ENCODE measurements at regions of chr12 and their contacts with region 1.

Region 1: DNA sequence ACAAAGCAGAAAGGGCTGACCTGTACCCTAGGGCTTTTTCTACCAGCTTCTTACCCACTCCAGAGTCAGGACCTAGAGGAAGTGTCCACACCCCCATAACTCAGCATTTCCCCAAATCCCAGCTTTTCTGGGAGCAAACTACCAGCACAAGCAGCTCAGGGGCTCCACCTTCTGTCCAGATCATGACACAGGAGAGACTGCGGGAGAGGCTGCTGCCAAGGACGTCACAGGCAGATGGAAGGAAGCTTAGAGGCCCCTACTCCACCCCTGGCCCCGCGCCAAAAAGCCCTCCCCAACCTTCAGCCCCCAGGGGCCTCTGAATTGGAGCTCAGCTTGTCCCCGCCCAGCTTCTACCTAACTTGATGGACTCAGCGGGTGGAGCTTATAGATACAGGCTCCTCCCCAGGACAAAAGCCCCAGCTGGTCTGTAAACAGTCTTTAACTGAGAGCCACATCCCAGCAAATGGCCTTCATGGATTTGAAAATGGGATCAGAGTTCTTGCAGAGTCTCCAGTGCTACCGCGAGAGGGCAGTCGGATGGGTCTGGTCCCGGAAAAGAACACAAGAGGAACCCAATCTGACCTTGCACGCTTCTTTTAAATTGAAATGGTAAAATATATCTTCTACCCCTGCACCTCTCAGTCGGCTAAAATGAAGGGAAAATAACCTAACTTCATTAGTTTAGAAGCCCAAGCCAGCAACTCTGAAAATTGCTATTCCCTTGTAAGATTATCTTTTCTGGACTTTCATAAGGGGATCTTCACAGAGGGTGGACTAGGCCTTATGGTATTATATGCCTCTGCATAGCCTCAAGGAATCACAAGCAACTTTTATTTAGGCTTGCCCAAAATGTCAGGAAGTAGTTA is 6.8 kb upstream of the BAZ2A start:
- DNase-seq: peak; percentile 85 to 98
- ATAC-seq: peak; percentile 60 to 85 (median 67)
- H3K4me3 ChIP-seq: peak overlapping the region; percentile 74
- H3K4me3 Mint-ChIP-seq: peak overlapping the region; percentile 99
- H3K27ac ChIP-seq: peak overlapping the region; percentile 68
- H3K27ac Mint-ChIP-seq: peak overlapping the region; percentile 91 to 93
- H3K4me1 ChIP-seq: peaks cover 51% of the 10 kb centered on the region
- H3K4me1 Mint-ChIP-seq: peaks cover 39 to 53% of the 10 kb centered on the region in 2 donors
- H3K27me3 ChIP-seq: no peaks in the 10 kb centered on the region
- H3K27me3 Mint-ChIP-seq: no peaks in the 10 kb centered on the region
- CTCF ChIP-seq: peak; percentile 57

Region 2: DNA sequence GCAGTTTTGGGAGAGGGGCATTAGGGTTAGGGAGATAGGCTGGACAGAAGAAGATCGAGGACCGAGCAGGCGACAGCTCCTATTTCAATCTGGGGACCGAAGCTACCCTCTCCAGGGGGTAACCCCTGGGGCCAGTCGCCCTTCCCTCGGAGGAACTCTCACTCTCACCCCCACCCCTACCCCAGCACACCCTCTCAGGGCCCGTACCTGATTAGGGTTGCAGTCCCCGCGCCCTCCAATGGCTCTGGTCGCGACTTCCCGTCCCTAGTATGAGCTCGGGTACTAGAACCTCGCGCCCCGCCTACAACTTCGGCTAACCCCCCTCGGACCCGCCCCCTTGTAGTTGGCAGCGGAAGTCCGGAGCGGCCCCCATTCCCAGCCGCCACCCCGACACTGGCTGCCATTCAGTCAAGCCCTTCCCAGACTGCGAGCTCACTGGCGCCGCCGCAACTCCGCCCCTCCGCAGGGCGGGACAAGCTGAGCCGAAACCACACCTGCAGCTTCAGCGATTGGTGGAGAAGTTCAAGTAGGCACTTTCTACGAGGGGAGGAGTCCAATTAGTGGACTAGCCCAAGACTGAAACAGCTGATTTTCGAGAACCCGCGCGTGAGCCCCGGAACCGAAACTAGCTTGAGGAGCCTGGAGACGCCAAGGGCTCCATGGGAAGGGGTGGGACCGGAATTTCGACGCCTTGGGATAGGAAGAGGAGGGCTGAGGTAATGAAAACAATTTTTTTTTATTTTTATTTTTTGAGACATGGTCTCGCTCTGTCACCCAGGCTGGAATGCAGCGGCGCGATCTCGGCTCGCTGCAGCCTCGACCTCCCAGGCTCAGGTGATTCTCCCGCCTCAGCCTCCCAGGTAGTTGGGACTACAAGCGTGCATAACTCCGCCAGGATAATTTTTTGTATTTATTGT is 276.8 kb before region 1 on chr12 and contains the start of gene STAT2:
- intact Hi-C with region 1: loop called (anchors 5 kb)
- DNase-seq: peak; percentile 98 to 99
- ATAC-seq: peak; percentile 93 to 98 (median 94)
- H3K4me3 ChIP-seq: peak within 1 kb of the TSS; percentile 80
- H3K4me3 Mint-ChIP-seq: peak within 1 kb of the TSS; percentile 97
- H3K27ac ChIP-seq: peak within 1 kb of the TSS; percentile 71
- H3K27ac Mint-ChIP-seq: peak within 1 kb of the TSS; percentile 88 to 91
- H3K4me1 ChIP-seq: peaks cover 17% of the 10 kb centered on the region
- H3K4me1 Mint-ChIP-seq: peaks cover 21 to 24% of the 10 kb centered on the region in 2 donors
- H3K27me3 ChIP-seq: no peaks in the 10 kb centered on the region
- H3K27me3 Mint-ChIP-seq: no peaks in the 10 kb centered on the region
- CTCF ChIP-seq: no peak
- total RNA-seq, gene STAT2: 140 to 157 (median 143) TPM

Region 3: GRCh38 chr12:56601503-56601902 is 35.4 kb before region 1 on chr12:
- intact Hi-C with region 1: loop called (anchors 5 kb)
- DNase-seq: peak in 1 of 2 donors; percentile 56
- ATAC-seq: peak in 2 of 3 donors; percentile 42 to 66
- H3K4me3 ChIP-seq: no peak overlapping the region
- H3K4me3 Mint-ChIP-seq: no peak overlapping the region
- H3K27ac ChIP-seq: no peak overlapping the region
- H3K27ac Mint-ChIP-seq: peak overlapping the region in 1 of 2 donors; percentile 50
- H3K4me1 ChIP-seq: no peaks in the 10 kb centered on the region
- H3K4me1 Mint-ChIP-seq: peaks cover 0 to 16% of the 10 kb centered on the region in 2 donors
- H3K27me3 ChIP-seq: no peaks in the 10 kb centered on the region
- H3K27me3 Mint-ChIP-seq: no peaks in the 10 kb centered on the region
- CTCF ChIP-seq: no peak

Region 4: DNA sequence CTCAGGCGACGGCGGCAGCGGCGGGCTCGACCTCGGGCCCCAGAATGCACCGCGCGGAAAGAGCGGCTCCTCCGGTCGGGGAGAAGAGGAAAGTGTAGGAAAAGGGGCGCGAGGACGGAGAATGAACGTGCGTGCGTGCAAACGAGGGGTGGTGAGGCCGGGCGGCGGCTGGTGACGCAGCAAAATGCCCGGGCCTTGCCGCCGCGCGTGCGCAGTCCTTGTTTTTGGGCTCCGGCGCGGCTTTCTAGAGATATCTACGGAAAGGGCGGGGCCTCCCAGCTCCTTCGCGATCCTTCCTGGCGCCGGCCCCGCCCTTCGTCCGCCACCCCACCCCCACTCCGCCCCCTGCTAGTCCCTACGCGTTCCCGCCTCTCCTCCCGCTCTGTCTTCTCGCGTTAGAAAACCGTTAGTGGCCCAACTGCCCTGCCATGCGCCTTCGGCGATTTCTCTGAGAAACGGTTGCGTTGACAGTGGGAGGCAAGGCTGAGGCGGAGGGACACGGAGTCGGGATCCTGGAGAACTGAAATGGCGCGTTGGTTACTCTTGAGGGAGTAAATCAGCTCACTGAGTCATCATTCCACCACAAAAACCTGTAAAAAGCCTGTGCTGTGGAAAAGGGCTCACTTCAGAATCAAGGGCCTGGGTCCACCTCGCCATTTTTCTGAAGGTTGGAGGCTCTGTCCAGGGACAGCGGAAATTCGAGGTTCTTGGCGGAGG is 51.4 kb after region 1 on chr12 and contains the start of gene PTGES3:
- intact Hi-C with region 1: loop called (anchors 2 kb)
- DNase-seq: peak; percentile 96 to 100
- ATAC-seq: peak; percentile 76 to 95 (median 83)
- H3K4me3 ChIP-seq: peak within 1 kb of the TSS; percentile 80
- H3K4me3 Mint-ChIP-seq: peak within 1 kb of the TSS; percentile 98
- H3K27ac ChIP-seq: peak within 1 kb of the TSS; percentile 94
- H3K27ac Mint-ChIP-seq: peak within 1 kb of the TSS; percentile 95 to 99
- H3K4me1 ChIP-seq: peaks cover 36% of the 10 kb centered on the region
- H3K4me1 Mint-ChIP-seq: peaks cover 41 to 44% of the 10 kb centered on the region in 2 donors
- H3K27me3 ChIP-seq: no peaks in the 10 kb centered on the region
- H3K27me3 Mint-ChIP-seq: no peaks in the 10 kb centered on the region
- CTCF ChIP-seq: no peak
- total RNA-seq, gene PTGES3: 79.2 to 93.8 (median 93.4) TPM

Region 5: GRCh38 chr12:57173089-57173488 is 536.2 kb after region 1 on chr12:
- intact Hi-C with region 1: no loop called
- DNase-seq: peak in 1 of 2 donors; percentile 47
- ATAC-seq: peak in 2 of 3 donors; percentile 34 to 48
- H3K4me3 ChIP-seq: no peak overlapping the region
- H3K4me3 Mint-ChIP-seq: no peak overlapping the region
- H3K27ac ChIP-seq: no peak overlapping the region
- H3K27ac Mint-ChIP-seq: no peak overlapping the region
- H3K4me1 ChIP-seq: no peaks in the 10 kb centered on the region
- H3K4me1 Mint-ChIP-seq: peaks cover 0 to 5% of the 10 kb centered on the region in 2 donors
- H3K27me3 ChIP-seq: no peaks in the 10 kb centered on the region
- H3K27me3 Mint-ChIP-seq: no peaks in the 10 kb centered on the region
- CTCF ChIP-seq: peak; percentile 32

Measured in natural killer cell (primary cell).